ENCODE measurements at regions of chr10 and their contacts with region 1.

Region 1: DNA sequence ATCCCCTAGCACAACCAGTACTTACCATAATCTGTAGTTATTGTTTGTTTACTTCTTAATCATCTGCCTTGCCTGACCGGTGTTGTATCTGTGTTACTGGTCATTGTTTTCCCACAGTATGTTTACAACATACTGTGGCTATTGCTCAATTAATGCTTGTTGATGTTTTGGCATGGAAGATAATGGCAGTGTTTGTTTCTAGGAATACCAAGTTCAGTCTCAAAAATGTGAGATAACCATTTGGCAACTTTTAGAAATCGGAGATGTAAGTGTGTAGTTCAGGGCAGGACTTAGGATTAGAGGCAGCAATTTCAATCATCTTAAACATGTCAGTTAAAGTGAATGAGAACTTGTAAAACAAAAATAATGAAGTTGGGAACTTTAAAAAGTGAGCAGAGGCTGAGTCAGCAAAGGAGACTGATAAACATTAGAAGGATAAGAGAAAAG is 8.2 kb downstream of the MINDY3 start:
- DNase-seq: no peak
- H3K4me3 ChIP-seq: no peak overlapping the region
- H3K27ac ChIP-seq: no peak overlapping the region
- H3K4me1 ChIP-seq: no peaks in the 10 kb centered on the region
- H3K27me3 ChIP-seq: no peaks in the 10 kb centered on the region
- CTCF ChIP-seq: no peak

Region 2: GRCh38 chr10:16001581-16001980 is 149.4 kb after region 1 on chr10:
- CTCF ChIA-PET with region 1: no interaction called
- dilution Hi-C with region 1: no loop called
- in situ Hi-C with region 1: no loop called
- intact Hi-C with region 1: no loop called
- DNase-seq: no peak
- H3K4me3 ChIP-seq: no peak overlapping the region
- H3K27ac ChIP-seq: no peak overlapping the region
- H3K4me1 ChIP-seq: no peaks in the 10 kb centered on the region
- H3K27me3 ChIP-seq: no peaks in the 10 kb centered on the region
- CTCF ChIP-seq: no peak

Region 3: GRCh38 chr10:16182688-16183087 is 330.6 kb after region 1 on chr10:
- CTCF ChIA-PET with region 1: interaction called, 14 read pairs
- dilution Hi-C with region 1: no loop called
- in situ Hi-C with region 1: no loop called
- intact Hi-C with region 1: no loop called
- DNase-seq: no peak
- H3K4me3 ChIP-seq: no peak overlapping the region
- H3K27ac ChIP-seq: no peak overlapping the region
- H3K4me1 ChIP-seq: peaks cover 4% of the 10 kb centered on the region
- H3K27me3 ChIP-seq: no peaks in the 10 kb centered on the region
- CTCF ChIP-seq: no peak

Measured in mammary epithelial cell (primary cell).